Activated T-helper 2 cell treated with anti-CD3 and anti-CD28 coated beads, Interferon-gamma antibody, Interleukin-2, Interleukin-4, amounts not matched to agents 10 μg/mL and 5 μg/mL and 100 μg/mL, durations not matched to agents 14 hours and 24 hours and 36 hours (primary cell): ENCODE measurements at regions of chr1 and their contacts with region 1.

Region 1: DNA sequence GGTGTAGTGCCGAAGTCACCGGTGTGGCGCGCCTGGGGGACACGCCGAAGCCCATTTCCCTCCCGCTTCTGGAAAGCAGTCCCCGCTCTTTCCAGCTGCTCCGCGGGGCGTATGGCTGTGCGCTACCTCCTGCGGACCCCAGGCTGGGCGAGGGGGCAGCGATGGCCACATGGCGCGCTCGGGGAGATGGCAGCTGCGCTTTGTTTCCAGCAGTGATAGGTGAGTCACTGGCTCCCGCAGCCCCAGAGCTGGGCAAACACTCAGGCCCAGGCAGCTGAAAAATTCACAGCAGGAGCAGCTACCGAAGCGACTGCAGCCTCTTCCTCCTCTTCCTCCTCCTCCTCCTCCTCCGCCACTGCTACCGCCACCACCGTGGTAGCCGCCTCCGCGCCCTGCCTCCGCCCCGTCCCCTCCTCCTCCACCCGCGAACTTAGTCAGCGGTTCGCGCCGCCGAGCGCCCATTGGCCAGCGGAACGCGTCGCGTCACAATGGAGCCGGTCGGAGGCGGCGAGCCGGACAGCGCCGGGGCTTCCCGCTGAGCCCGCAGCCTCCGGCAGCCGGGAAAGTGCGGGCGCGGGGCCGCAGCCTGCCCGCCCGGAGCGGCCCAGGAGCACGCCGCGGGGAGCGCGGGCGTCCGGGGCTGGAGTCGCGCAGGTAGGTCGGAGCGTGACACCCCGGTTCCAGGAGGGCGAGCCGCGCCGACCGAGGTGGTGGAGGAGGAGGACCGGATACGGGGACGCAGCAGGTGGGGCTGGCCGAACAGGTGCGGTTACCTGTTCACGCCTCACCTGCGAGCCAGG is at the start of gene LRRC8B:
- DNase-seq: peak; percentile 91
- H3K4me3 Mint-ChIP-seq: no peak within 1 kb of the TSS
- H3K27ac Mint-ChIP-seq: no peak within 1 kb of the TSS
- H3K4me1 Mint-ChIP-seq: peaks cover 35% of the 10 kb centered on the region
- H3K27me3 Mint-ChIP-seq: no peaks in the 10 kb centered on the region
- total RNA-seq, gene LRRC8B: 48.2 and 48.7 TPM in 2 replicates

Region 2: GRCh38 chr1:88891318-88891950 is 633.1 kb before region 1 on chr1 and contains the start of gene GTF2B:
- intact Hi-C with region 1: loop called (anchors 5 kb)
- DNase-seq: peak; percentile 93
- H3K4me3 Mint-ChIP-seq: peak within 1 kb of the TSS; percentile 97
- H3K27ac Mint-ChIP-seq: peak within 1 kb of the TSS; percentile 96
- H3K4me1 Mint-ChIP-seq: peaks cover 37% of the 10 kb centered on the region
- H3K27me3 Mint-ChIP-seq: peaks cover 2% of the 10 kb centered on the region
- total RNA-seq, gene GTF2B: 37.6 and 42.2 TPM in 2 replicates

Region 3: GRCh38 chr1:89198491-89199072 is 326.0 kb before region 1 on chr1 and contains the start of gene GBP4:
- intact Hi-C with region 1: loop called (anchors 5 kb)
- DNase-seq: peak; percentile 30
- H3K4me3 Mint-ChIP-seq: peak within 1 kb of the TSS; percentile 86
- H3K27ac Mint-ChIP-seq: peak within 1 kb of the TSS; percentile 93
- H3K4me1 Mint-ChIP-seq: peaks cover 79% of the 10 kb centered on the region
- H3K27me3 Mint-ChIP-seq: no peaks in the 10 kb centered on the region
- total RNA-seq, gene GBP4: 13.9 and 14.3 TPM in 2 replicates

Region 4: GRCh38 chr1:89545264-89546038 is 20.9 kb after region 1 on chr1:
- intact Hi-C with region 1: loop called (anchors 1 kb)
- DNase-seq: peak; percentile 26
- H3K4me3 Mint-ChIP-seq: peak overlapping the region; percentile 30
- H3K27ac Mint-ChIP-seq: peak overlapping the region; percentile 93
- H3K4me1 Mint-ChIP-seq: peaks cover 79% of the 10 kb centered on the region
- H3K27me3 Mint-ChIP-seq: no peaks in the 10 kb centered on the region

Region 5: GRCh38 chr1:89598450-89599331 is 74.1 kb after region 1 on chr1:
- intact Hi-C with region 1: loop called (anchors 1 kb)
- DNase-seq: no peak
- H3K4me3 Mint-ChIP-seq: no peak overlapping the region
- H3K27ac Mint-ChIP-seq: peak overlapping the region; percentile 66
- H3K4me1 Mint-ChIP-seq: peaks cover 75% of the 10 kb centered on the region
- H3K27me3 Mint-ChIP-seq: no peaks in the 10 kb centered on the region

Region 6: GRCh38 chr1:89762779-89763648 is 238.4 kb after region 1 on chr1:
- intact Hi-C with region 1: loop called (anchors 2 kb)
- DNase-seq: peak; percentile 80
- H3K4me3 Mint-ChIP-seq: peak overlapping the region; percentile 89
- H3K27ac Mint-ChIP-seq: peak overlapping the region; percentile 95
- H3K4me1 Mint-ChIP-seq: peaks cover 56% of the 10 kb centered on the region
- H3K27me3 Mint-ChIP-seq: no peaks in the 10 kb centered on the region